BJ (cell line): ENCODE measurements at regions of chr15 and their contacts with region 1.

Region 1: GRCh38 chr15:78968539-78969271 is 23.9 kb upstream of the CTSH start:
- DNase-seq: peak; percentile 21
- H3K4me3 ChIP-seq: no peak overlapping the region
- H3K27me3 ChIP-seq: no peaks in the 10 kb centered on the region; the same call in 1 of the 2 replicates
- CTCF ChIP-seq: no peak

Region 2: DNA sequence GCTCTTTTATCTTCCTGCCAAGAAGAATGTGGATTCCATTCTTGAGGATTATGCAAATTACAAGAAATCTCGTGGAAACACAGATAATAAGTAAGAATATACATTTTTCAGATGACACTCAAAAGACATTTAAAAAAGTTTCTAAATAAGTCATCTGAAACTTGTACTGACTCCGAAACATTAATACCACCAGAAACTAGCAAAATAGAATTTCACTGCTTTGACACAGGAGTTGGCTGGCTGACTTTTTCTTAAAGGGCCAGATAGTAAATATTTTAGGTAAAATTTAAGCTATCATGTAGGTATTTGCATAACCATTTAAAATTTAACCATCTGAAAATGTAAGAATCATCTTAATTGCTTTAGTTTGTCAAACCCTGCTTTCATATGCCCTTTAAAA is 75.2 kb before region 1 on chr15:
- CTCF ChIA-PET with region 1: no interaction called
- POLR2A ChIA-PET with region 1: interaction called, 22 read pairs
- DNase-seq: no peak
- H3K4me3 ChIP-seq: no peak overlapping the region
- H3K27me3 ChIP-seq: no peaks in the 10 kb centered on the region
- CTCF ChIP-seq: no peak

Region 3: GRCh38 chr15:79071901-79072300 is 103.2 kb after region 1 on chr15:
- CTCF ChIA-PET with region 1: no interaction called
- POLR2A ChIA-PET with region 1: no interaction called
- DNase-seq: no peak
- H3K4me3 ChIP-seq: no peak overlapping the region
- H3K27me3 ChIP-seq: no peaks in the 10 kb centered on the region
- CTCF ChIP-seq: no peak